HepG2 (cell line): ENCODE measurements at regions of chr2 and their contacts with region 1.

Region 1: DNA sequence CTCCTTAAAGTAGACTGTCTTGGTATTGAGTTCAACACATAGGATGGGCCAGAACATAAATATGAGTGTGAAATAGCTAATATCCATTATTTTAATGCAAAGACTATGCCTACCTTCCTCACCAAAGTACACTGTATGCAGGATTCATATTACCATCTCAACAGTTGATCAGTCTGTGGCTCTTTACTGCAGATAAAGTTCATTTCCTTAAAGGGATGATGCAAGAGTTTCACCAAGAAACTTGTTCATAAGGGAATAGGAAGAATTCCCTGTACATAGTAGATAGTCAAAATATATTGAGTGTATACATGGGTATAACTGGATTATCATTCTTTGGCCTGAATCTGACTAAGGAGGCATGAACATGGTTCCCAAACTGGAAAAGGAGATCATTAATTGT is 35.0 kb downstream of the MARS2 start:
- DNase-seq: no peak
- ATAC-seq: no peak
- H3K4me3 ChIP-seq: no peak overlapping the region
- H3K27ac ChIP-seq: no peak overlapping the region
- H3K4me1 ChIP-seq: no peaks in the 10 kb centered on the region
- H3K27me3 ChIP-seq: no peaks in the 10 kb centered on the region
- CTCF ChIP-seq: no peak
- EP300 ChIP-seq: no peak
- POLR2A ChIP-seq: no peak
- RAD21 ChIP-seq: no peak

Region 2: DNA sequence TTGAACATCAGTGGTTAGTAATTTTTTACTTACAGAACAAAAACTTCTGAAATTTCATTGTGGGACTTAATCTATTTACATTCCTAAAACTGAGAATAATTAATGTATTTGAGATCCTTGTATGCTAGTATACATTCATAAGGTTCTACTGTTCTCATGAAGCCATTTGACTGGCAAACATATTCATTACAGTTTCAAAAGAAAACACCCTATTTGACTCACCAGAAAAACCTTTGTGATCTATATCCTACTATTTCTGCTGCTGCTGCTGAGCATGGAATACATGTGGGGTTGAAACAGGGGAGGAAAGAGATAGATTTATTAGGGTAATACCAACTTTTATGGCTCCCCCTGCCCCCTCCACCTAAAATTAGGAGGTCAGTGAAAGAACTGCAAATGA is 13.2 kb before region 1 on chr2:
- CTCF ChIA-PET with region 1: no interaction called
- POLR2A ChIA-PET with region 1: no interaction called
- in situ Hi-C with region 1: no loop called
- intact Hi-C with region 1: loop called (anchors 1 kb)
- DNase-seq: no peak
- ATAC-seq: no peak
- H3K4me3 ChIP-seq: no peak overlapping the region
- H3K27ac ChIP-seq: no peak overlapping the region
- H3K4me1 ChIP-seq: no peaks in the 10 kb centered on the region
- H3K27me3 ChIP-seq: no peaks in the 10 kb centered on the region
- CTCF ChIP-seq: no peak
- EP300 ChIP-seq: no peak
- POLR2A ChIP-seq: no peak
- RAD21 ChIP-seq: no peak

Region 3: DNA sequence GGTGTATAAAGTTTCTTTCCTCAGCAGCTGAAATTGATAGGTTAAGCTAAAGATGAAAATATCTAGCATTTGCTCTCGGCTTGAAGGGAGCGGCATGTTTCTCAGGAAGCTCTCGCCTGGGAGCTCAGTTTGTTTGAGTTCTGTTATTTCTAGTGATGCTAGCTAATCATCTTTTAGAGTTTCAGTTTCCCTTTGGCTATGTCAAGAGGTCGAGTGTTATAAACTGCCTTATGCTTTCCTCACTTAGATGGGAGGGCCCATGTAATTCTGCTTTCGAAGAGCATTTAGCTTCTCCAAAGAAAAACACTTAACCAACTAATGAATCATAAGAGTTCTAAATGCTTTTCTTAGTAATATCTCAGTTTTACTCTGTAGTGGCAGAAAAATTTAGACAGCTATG is 97.8 kb after region 1 on chr2:
- CTCF ChIA-PET with region 1: no interaction called
- POLR2A ChIA-PET with region 1: no interaction called
- in situ Hi-C with region 1: no loop called
- intact Hi-C with region 1: no loop called
- DNase-seq: no peak
- ATAC-seq: no peak
- H3K4me3 ChIP-seq: no peak overlapping the region
- H3K27ac ChIP-seq: no peak overlapping the region
- H3K4me1 ChIP-seq: no peaks in the 10 kb centered on the region
- H3K27me3 ChIP-seq: peaks cover 0 to 3% of the 10 kb centered on the region in 2 experiments; a peak in 1 of 5 replicates
- CTCF ChIP-seq: no peak
- EP300 ChIP-seq: no peak
- POLR2A ChIP-seq: no peak
- RAD21 ChIP-seq: no peak

Region 4: DNA sequence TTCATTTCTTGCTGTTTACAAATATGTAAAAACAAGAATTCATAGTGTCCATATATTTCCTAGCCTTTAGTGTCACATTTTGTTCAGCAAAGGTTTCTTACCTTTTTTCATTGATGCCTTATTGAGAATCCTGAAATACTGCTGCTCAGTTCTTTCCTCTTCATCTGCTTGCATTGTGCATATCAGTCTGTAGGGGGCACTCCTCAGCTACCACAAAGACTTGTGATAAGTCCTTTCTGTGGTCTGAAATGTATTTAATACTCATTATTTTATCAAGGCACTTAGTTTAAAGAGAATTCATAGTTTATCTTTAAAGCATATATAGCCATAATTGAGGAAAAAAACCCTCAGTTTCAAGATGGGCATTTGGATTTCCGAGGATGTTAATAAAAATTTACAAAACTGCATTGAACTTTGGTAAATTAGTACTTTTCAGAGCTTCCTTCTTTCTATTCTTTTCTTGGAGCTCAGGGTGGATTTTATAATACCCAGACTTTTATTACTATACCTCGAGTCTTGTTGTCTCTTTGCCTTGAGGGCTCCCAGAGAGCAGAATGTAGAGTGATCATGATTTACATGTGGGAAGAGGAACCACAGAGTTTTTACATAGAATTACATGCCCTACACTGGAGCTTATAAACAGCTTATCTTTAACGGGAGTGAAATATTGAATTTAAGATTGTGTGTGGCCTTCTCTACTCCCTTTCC is 634.3 kb after region 1 on chr2:
- CTCF ChIA-PET with region 1: no interaction called
- POLR2A ChIA-PET with region 1: no interaction called
- in situ Hi-C with region 1: no loop called
- intact Hi-C with region 1: no loop called
- DNase-seq: peak; percentile 51
- ATAC-seq: peak; percentile 69
- H3K4me3 ChIP-seq: no peak overlapping the region
- H3K27ac ChIP-seq: no peak overlapping the region
- H3K4me1 ChIP-seq: no peaks in the 10 kb centered on the region
- H3K27me3 ChIP-seq: no peaks in the 10 kb centered on the region
- CTCF ChIP-seq: peak; percentile 73
- EP300 ChIP-seq: no peak
- POLR2A ChIP-seq: no peak
- RAD21 ChIP-seq: no peak